Activated T-helper 2 cell treated with anti-CD3 and anti-CD28 coated beads, Interferon-gamma antibody, Interleukin-2, Interleukin-4, amounts not matched to agents 10 μg/mL and 5 μg/mL and 100 μg/mL, durations not matched to agents 14 hours and 24 hours and 36 hours (primary cell): ENCODE measurements at regions of chr11 and their contacts with region 1.

Region 1: DNA sequence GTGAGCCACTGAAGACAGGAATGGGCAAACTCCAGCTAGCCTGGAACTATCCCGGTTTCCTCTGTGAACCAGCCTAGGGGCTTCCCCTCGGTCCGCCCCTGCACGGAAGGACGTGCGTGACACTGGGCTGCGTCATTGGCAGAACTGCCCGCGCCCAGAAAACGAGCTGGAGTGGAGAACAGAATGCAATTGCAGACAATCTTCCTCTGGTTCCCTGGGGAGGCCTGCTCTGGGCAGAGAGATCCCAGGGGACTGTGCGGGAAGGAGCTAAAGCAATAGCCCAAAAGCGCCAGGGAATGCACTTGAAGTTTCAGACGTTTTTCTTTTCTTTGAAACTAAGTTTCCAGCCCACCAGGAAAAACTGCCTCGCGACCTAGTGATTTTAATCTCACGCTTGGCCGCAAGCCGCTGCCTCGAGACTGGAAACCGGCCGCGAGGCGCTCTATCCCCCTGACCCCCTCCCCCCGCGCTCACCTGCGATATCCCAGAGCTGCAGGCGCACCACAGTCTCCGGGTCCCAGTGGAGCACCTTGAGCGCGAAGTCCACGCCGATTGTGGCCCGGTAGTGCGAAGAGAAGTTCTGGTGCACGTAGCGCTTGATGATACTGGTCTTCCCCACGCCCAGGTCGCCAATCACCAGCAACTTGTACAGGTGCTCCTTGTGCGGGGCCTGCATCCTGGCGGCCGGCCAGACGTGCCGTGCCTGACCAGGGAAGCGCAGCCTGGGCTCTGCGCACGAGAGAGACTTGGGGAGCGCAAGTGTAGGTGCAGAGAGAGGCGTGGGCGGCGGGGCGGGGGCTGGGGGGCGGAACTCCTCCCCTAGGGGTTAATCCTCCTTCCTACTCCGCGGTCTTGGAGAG is at the start of gene RAB38:
- DNase-seq: peak; percentile 20
- H3K4me3 Mint-ChIP-seq: peak within 1 kb of the TSS; percentile 72
- H3K27ac Mint-ChIP-seq: peak within 1 kb of the TSS; percentile 47
- H3K4me1 Mint-ChIP-seq: peaks cover 45% of the 10 kb centered on the region
- H3K27me3 Mint-ChIP-seq: peaks cover 15% of the 10 kb centered on the region
- total RNA-seq, gene RAB38: 2.0 and 2.3 TPM in 2 replicates

Region 2: DNA sequence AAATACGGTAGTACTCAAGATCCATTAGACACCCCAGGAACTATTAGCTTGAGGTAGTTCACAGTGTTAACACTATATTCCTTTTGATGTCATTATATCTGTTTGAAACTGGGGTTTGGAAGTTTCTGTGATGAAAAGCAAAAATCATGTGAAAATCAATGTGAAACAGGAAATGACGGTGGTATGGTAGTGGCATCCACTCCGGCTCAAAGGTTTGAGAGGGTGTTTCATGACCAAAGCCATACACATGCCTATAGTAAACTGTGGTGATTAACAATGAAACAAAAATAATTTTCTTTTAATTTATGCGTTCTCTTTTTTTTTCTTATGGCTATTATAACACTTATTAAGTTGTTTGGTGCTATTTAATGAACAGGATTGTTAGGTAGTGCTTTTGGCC is 10.6 kb before region 1 on chr11:
- intact Hi-C with region 1: loop called (anchors 2 kb)
- DNase-seq: no peak
- H3K4me3 Mint-ChIP-seq: no peak overlapping the region
- H3K27ac Mint-ChIP-seq: no peak overlapping the region
- H3K4me1 Mint-ChIP-seq: peaks cover 2% of the 10 kb centered on the region
- H3K27me3 Mint-ChIP-seq: peaks cover 24% of the 10 kb centered on the region

Region 3: DNA sequence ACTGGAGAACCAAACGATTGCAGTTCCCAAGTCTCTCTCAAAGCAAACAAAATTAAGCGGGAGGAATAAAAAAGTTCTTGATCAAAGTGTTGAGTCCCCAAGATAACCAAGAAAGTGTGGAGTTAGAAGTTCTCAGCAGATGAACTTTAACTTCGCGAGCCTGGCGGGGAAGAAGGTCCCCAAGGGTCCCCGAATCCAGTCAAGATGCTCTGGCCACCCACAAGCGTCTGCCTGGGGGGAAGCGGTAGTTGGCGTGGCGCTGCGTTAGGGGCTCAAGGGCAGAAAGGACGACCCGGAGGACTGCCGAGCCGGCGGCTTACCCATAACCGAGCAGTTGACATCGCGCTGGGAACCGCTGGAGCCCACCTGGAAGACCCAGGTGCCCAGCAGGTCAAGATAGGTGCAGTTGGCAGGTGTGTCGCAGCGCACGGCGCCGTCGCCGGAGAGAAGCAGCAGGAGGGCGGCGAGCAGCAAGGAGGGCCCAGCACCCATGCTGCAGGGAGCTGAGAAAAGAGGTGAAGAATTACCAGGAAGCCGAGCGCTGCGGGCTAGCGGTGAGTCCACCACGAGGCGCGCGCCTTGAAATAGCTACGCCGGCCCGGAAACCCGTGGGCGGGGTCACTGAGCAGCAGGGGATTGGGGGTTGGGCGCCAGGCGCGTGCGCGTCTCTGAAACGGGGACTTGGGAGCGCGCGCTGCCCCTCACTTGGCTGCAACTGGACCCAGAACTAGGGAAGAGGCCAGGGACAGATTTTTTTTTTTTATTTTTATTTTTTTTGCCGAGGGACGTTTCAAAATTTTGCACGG is 162.4 kb after region 1 on chr11 and contains the start of gene CTSC:
- intact Hi-C with region 1: loop called (anchors 2 kb)
- DNase-seq: peak; percentile 91
- H3K4me3 Mint-ChIP-seq: peak within 1 kb of the TSS; percentile 96
- H3K27ac Mint-ChIP-seq: peak within 1 kb of the TSS; percentile 96
- H3K4me1 Mint-ChIP-seq: peaks cover 58% of the 10 kb centered on the region
- H3K27me3 Mint-ChIP-seq: no peaks in the 10 kb centered on the region
- total RNA-seq, gene CTSC: 82.4 and 82.6 TPM in 2 replicates

Region 4: GRCh38 chr11:88414385-88414861 is 239.5 kb after region 1 on chr11:
- intact Hi-C with region 1: loop called (anchors 2 kb)
- DNase-seq: no peak
- H3K4me3 Mint-ChIP-seq: no peak overlapping the region
- H3K27ac Mint-ChIP-seq: peak overlapping the region; percentile 71
- H3K4me1 Mint-ChIP-seq: peaks cover 50% of the 10 kb centered on the region
- H3K27me3 Mint-ChIP-seq: no peaks in the 10 kb centered on the region

Region 5: GRCh38 chr11:88535916-88536547 is 361.1 kb after region 1 on chr11:
- intact Hi-C with region 1: loop called (anchors 2 kb)
- DNase-seq: no peak
- H3K4me3 Mint-ChIP-seq: no peak overlapping the region
- H3K27ac Mint-ChIP-seq: peak overlapping the region; percentile 16
- H3K4me1 Mint-ChIP-seq: peaks cover 20% of the 10 kb centered on the region
- H3K27me3 Mint-ChIP-seq: peaks cover 5% of the 10 kb centered on the region

Region 6: DNA sequence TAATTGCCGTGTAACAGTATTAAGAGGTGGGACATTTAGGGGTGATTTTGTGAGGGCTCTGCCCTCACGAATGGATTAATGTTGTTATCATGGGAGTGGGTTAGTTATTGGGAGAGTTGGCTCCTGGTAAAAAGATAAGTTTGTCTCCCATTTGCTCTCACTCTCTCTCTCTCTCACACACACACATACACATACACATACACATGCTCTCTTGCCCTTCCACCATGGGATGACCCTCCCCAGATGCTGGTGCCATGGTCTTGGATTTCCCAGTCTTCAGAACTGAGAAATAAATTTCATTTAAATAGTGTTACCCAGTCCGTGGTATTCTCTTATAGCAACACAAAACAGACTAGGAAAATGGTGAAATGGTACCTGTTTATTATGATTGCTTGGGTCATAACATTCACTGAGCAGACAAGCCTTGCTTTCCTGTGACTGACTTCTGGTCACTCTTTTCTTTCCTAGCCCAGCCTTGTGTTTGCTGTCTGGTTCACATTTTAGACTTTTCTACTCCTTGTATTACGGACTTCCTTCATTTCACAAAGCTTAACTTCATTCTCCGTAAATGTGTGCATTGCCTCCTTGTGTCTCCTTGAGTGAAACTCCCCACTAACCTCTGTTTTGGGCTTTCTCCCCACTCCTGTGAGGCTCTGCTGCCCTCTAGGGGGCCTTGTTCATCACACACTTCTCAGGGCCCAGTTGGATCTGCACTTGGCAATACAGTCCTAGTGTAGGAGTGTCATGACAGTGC is 369.1 kb after region 1 on chr11:
- intact Hi-C with region 1: loop called (anchors 2 kb)
- DNase-seq: peak; percentile 71
- H3K4me3 Mint-ChIP-seq: no peak overlapping the region
- H3K27ac Mint-ChIP-seq: no peak overlapping the region
- H3K4me1 Mint-ChIP-seq: peaks cover 4% of the 10 kb centered on the region
- H3K27me3 Mint-ChIP-seq: peaks cover 15% of the 10 kb centered on the region